ENCODE measurements at regions of chr5 and their contacts with region 1.

Region 1: DNA sequence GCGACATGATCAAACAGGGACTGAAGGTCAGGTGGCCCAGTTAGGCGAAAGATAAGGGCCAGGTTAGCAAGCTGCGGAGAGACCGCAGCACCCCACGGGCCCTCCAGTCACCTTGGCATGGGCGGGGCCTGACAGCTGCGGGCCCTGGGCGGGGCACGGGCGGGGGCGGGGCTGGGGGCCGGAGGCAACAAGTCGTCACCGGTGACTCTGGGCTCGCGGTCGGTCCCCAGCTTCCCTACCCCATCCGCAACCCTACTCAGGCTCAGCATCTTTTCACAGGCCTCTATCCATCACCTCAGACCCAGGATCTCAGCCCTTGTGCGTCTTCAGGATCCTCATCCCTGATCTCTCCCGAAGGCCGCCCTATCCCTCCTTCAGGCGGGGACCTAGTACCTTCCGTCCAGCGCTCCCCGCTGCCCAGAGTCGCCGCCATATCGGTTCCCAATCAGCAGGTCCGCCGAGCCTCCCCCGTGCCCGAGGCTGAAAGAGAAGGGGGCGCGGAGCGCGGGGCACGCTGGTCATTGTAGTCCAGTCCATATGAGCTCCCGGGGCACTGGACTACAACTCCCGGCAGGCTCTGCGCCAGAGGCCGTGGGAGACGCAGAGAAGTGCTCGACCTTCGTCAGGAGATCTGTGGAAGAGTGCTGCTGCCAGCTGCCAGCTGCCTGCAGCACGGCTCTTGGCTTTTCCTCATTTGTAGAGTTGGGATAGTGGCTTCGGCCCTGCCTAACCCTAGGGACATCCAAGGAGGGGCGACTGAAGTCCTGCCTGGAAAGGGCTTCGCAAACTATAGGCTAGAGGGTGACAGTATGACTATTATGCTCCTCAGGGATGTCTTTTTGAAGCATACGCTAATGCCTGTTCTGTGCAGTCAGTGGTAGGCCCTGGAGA is at the start of gene DNAJC18:
- DNase-seq: peak; percentile 97
- H3K4me3 Mint-ChIP-seq: peak within 1 kb of the TSS; percentile 97
- H3K27ac Mint-ChIP-seq: peak within 1 kb of the TSS; percentile 99
- H3K4me1 Mint-ChIP-seq: peaks cover 55% of the 10 kb centered on the region
- H3K27me3 Mint-ChIP-seq: no peaks in the 10 kb centered on the region
- total RNA-seq, gene DNAJC18: 34.2 and 38.6 TPM in 2 replicates

Region 2: DNA sequence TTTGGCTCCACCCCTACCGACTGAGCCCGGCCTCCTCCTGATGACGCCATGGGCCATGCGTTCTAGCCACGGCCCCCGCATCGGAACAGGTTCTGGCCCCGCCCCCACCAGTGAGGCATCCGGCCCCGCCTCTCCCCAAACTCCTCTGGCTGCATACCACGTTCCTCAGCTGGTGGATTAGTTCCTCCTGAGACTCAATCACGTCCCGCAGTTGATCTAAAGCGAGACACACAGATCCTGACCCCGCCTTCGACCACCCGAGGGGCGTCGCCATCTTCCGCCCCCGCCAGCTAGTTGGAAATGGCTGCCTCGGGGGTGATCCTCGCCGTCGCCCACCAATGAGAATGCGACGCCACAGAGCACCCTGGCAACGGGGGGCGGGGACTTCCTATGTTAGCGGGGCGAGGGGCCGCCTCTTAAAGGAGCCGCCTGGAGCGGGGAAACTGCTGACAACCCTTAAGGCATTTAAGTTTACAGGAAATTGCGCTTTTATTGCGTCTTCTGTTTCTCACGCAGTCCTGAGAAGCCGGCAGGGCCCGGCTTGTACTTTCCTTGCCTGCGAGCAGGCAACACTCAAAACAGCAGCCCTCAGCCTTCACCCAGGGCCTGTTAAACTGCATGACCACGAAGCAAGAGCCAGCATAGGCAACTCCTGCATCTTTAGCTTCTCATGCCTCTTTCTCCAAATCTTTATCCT is 35.3 kb before region 1 on chr5 and contains the start of gene SPATA24:
- intact Hi-C with region 1: loop called (anchors 1 kb)
- DNase-seq: peak; percentile 99
- H3K4me3 Mint-ChIP-seq: peak within 1 kb of the TSS; percentile 87
- H3K27ac Mint-ChIP-seq: peak within 1 kb of the TSS; percentile 99
- H3K4me1 Mint-ChIP-seq: peaks cover 37% of the 10 kb centered on the region
- H3K27me3 Mint-ChIP-seq: no peaks in the 10 kb centered on the region
- total RNA-seq, gene SPATA24: 4.2 TPM in 2 replicates

Region 3: GRCh38 chr5:139415221-139415861 is 23.9 kb before region 1 on chr5:
- intact Hi-C with region 1: loop called (anchors 1 kb)
- DNase-seq: peak; percentile 81
- H3K4me3 Mint-ChIP-seq: peak overlapping the region; percentile 64
- H3K27ac Mint-ChIP-seq: peak overlapping the region; percentile 95
- H3K4me1 Mint-ChIP-seq: peaks cover 60% of the 10 kb centered on the region
- H3K27me3 Mint-ChIP-seq: no peaks in the 10 kb centered on the region

Region 4: GRCh38 chr5:139422307-139422893 is 16.9 kb before region 1 on chr5:
- intact Hi-C with region 1: loop called (anchors 2 kb)
- DNase-seq: peak; percentile 91
- H3K4me3 Mint-ChIP-seq: no peak overlapping the region
- H3K27ac Mint-ChIP-seq: peak overlapping the region; percentile 62
- H3K4me1 Mint-ChIP-seq: peaks cover 32% of the 10 kb centered on the region
- H3K27me3 Mint-ChIP-seq: no peaks in the 10 kb centered on the region

Region 5: DNA sequence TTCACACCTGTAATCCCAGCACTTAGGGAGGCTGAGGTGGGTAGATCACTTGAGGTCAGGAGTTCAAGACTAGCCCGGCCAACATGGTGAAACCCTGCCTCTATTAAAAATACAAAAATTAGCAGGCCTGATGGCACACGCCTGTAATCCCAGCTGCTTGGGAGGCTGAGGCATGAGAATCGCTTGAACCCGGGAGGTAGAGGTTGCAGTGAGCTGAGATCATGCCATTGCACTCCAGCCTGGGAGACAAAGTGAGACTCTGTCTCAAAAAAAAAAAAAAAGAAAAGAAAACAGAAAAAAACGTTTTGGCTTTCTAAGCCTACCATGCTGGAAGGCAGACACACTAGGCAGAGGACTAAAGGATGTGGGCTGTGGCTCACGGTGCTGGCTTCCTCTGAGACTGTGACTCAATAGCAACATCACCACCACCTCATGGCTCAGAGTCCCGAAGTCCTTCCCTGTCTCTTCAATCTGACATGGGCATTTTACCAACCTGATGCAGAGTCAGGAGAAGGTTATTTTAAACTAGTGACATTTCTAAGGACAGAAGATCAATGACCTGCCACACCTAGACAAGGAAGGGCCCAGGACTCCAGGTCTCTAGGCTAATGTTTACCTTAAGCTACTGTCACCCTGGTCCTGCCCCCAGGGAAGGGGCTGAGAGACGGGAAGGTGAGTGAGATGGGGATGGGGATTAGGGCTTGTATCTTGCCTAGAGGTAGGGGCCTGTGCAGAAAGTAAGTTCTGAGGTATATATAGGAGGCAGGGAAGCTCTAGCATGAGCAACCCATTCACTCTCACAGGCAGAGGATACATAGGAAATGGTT is 19.5 kb after region 1 on chr5:
- intact Hi-C with region 1: loop called (anchors 1 kb)
- DNase-seq: peak; percentile 93
- H3K4me3 Mint-ChIP-seq: peak overlapping the region; percentile 75
- H3K27ac Mint-ChIP-seq: peak overlapping the region; percentile 94
- H3K4me1 Mint-ChIP-seq: peaks cover 57% of the 10 kb centered on the region
- H3K27me3 Mint-ChIP-seq: peaks cover under 1% of the 10 kb centered on the region

Region 6: DNA sequence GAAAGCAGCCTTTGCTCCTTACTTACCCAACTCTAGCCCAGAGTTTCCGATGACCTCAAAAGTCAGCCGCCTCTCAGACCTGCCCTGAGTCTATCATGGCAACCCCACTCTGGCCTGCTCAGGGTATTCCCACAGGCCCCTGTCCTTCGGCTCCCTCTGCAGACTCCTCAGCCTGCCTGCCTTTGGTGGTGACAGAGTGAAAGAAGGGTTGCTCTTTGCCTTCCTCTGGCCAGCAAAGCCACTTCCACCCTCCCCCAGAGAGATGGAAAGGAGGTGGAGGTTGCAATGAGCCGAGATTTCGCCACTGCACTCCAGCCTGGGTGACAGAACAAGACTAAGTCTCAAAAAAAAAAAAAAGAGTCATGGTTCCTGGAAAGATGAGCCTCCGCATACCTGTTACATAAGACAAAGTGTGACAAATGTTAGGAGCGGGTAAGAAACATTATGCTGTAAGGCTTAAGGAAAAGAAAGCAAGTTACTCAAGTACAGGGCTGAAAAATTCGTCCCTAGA is 29.2 kb after region 1 on chr5:
- intact Hi-C with region 1: loop called (anchors 1 kb)
- DNase-seq: peak; percentile 78
- H3K4me3 Mint-ChIP-seq: peak overlapping the region; percentile 41
- H3K27ac Mint-ChIP-seq: peak overlapping the region; percentile 75
- H3K4me1 Mint-ChIP-seq: peaks cover 45% of the 10 kb centered on the region
- H3K27me3 Mint-ChIP-seq: no peaks in the 10 kb centered on the region

Region 7: GRCh38 chr5:139482050-139482889 is 43.0 kb after region 1 on chr5 and contains the start of gene STING1:
- intact Hi-C with region 1: loop called (anchors 2 kb)
- DNase-seq: peak; percentile 89
- H3K4me3 Mint-ChIP-seq: peak within 1 kb of the TSS; percentile 89
- H3K27ac Mint-ChIP-seq: peak within 1 kb of the TSS; percentile 96
- H3K4me1 Mint-ChIP-seq: peaks cover 38% of the 10 kb centered on the region
- H3K27me3 Mint-ChIP-seq: no peaks in the 10 kb centered on the region
- total RNA-seq, gene STING1: 198 and 201 TPM in 2 replicates

Region 8: GRCh38 chr5:139495638-139496435 is 56.6 kb after region 1 on chr5:
- intact Hi-C with region 1: no loop called
- DNase-seq: no peak
- H3K4me3 Mint-ChIP-seq: no peak overlapping the region
- H3K27ac Mint-ChIP-seq: peak overlapping the region; percentile 85
- H3K4me1 Mint-ChIP-seq: peaks cover 20% of the 10 kb centered on the region
- H3K27me3 Mint-ChIP-seq: no peaks in the 10 kb centered on the region